ENCODE measurements at regions of chr9 and their contacts with region 1.

Region 1: GRCh38 chr9:96217754-96218693 is 84.0 kb downstream of the HSD17B3 start:
- DNase-seq: peak; percentile 73
- H3K4me3 Mint-ChIP-seq: peak overlapping the region; percentile 39
- H3K27ac Mint-ChIP-seq: no peak overlapping the region
- H3K4me1 Mint-ChIP-seq: peaks cover 19% of the 10 kb centered on the region
- H3K27me3 Mint-ChIP-seq: peaks cover 66% of the 10 kb centered on the region

Region 2: GRCh38 chr9:95379630-95380029 is 838.4 kb before region 1 on chr9:
- CTCF ChIA-PET with region 1: interaction called, 13 read pairs
- POLR2A ChIA-PET with region 1: no interaction called
- DNase-seq: peak; percentile 32
- H3K4me3 Mint-ChIP-seq: no peak overlapping the region
- H3K27ac Mint-ChIP-seq: no peak overlapping the region
- H3K4me1 Mint-ChIP-seq: no peaks in the 10 kb centered on the region
- H3K27me3 Mint-ChIP-seq: peaks cover 38% of the 10 kb centered on the region